Activated CD4-positive, alpha-beta memory T cell treated with anti-CD3 and anti-CD28 coated beads for 36 hours (primary cell): ENCODE measurements at regions of chr16 and their contacts with region 1.

Region 1: GRCh38 chr16:71412270-71413160 is 29.3 kb downstream of the TLE7 start:
- DNase-seq: peak; percentile 71
- H3K4me3 Mint-ChIP-seq: no peak overlapping the region
- H3K27ac Mint-ChIP-seq: no peak overlapping the region
- H3K4me1 Mint-ChIP-seq: peaks cover 5% of the 10 kb centered on the region
- H3K27me3 Mint-ChIP-seq: peaks cover 34% of the 10 kb centered on the region

Region 2: DNA sequence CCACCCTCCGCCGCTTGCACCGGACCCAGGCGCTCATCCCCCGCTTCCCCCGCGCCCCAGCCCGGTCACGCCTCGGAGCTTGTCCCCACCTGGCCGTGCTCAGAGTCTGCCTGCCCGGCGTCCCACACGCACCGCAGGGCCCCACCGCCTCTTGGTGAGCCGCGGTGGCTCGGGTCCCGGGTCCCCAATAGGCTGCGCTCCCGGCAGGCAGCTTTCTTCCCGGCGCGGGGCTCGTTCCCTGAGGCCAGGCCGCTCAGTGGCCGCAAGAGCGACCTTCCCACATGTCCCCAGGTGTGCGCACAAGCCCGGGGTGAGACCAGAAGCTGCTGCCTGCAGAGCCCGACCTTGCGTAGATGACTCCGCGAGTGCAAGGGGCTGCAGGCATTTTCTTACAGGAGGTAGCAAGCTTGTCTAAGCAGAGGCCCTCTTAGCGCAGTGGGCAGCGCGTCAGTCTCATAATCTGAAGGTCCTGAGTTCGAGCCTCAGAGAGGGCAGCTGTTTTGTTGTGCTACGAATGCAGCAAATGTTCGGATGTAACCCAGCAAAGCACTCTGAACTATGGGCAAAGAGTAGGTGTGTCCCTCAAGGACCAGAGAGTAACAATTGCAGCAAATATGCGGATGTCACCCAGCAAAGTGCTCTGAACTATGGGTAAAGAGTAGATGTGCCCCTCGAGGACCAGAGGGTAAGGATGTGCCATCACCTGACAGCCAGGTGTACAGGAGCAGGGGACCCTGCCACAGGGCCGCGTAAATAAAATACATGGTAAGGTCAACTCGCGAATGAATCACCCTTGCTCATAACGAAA is 13.8 kb after region 1 on chr16:
- CTCF ChIA-PET with region 1: interaction called, 22 read pairs
- POLR2A ChIA-PET with region 1: no interaction called
- intact Hi-C with region 1: no loop called
- DNase-seq: peak; percentile 41
- H3K4me3 Mint-ChIP-seq: no peak overlapping the region
- H3K27ac Mint-ChIP-seq: no peak overlapping the region
- H3K4me1 Mint-ChIP-seq: peaks cover 5% of the 10 kb centered on the region
- H3K27me3 Mint-ChIP-seq: peaks cover 37% of the 10 kb centered on the region

Region 3: DNA sequence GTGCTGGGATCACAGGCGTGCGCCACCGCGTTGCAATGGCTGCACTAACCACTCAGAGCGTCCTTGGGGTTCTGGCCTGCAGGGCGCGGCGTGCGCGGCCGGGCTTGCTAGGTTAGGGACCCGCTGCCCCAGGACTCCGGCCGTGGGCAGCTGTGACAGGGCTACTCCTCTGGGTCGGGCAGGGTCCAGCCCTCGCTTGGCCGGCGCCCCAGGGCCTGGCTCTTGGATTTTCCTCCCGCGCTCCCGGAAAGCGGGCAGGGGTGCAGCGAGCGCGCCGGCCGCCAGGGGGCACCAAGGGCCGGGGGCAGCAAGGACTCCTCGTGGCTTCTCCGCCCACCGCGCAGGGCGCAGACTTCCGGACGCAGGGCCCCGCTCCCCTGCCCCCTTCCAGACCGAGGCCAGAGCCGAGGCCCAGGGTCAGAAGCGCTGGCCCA is 28.9 kb after region 1 on chr16:
- CTCF ChIA-PET with region 1: interaction called, 14 read pairs
- POLR2A ChIA-PET with region 1: no interaction called
- intact Hi-C with region 1: no loop called
- DNase-seq: peak; percentile 44
- H3K4me3 Mint-ChIP-seq: no peak overlapping the region
- H3K27ac Mint-ChIP-seq: no peak overlapping the region
- H3K4me1 Mint-ChIP-seq: no peaks in the 10 kb centered on the region
- H3K27me3 Mint-ChIP-seq: peaks cover 10% of the 10 kb centered on the region

Region 4: GRCh38 chr16:71499775-71500364 is 87.4 kb after region 1 on chr16:
- CTCF ChIA-PET with region 1: interaction called, 141 read pairs
- POLR2A ChIA-PET with region 1: no interaction called
- intact Hi-C with region 1: loop called (anchors 1 kb)
- DNase-seq: peak; percentile 47
- H3K4me3 Mint-ChIP-seq: no peak overlapping the region
- H3K27ac Mint-ChIP-seq: no peak overlapping the region
- H3K4me1 Mint-ChIP-seq: no peaks in the 10 kb centered on the region
- H3K27me3 Mint-ChIP-seq: peaks cover 2% of the 10 kb centered on the region

Region 5: GRCh38 chr16:71520555-71520954 is 108.0 kb after region 1 on chr16:
- CTCF ChIA-PET with region 1: no interaction called
- POLR2A ChIA-PET with region 1: no interaction called
- intact Hi-C with region 1: no loop called
- DNase-seq: no peak
- H3K4me3 Mint-ChIP-seq: no peak overlapping the region
- H3K27ac Mint-ChIP-seq: no peak overlapping the region
- H3K4me1 Mint-ChIP-seq: no peaks in the 10 kb centered on the region
- H3K27me3 Mint-ChIP-seq: peaks cover 5% of the 10 kb centered on the region

Region 6: DNA sequence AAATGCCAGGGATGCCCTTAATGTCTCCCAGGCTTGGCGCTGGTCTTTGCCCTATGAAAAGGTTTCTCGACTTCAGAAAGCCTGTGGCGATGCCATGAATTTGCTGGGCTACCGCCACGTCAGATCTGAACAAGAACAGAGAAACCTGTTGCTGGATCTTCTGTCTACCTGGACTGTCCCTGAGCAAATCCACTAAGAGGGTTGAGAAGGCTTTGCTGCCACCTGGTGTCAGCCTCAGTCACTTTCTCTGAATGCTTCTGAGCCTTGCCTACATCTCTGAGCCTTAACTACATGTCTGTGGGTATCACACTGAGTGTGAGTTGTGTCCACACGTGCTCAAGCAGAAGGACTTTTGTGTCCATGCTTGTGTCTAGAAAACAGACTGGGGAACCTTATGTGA is 125.1 kb after region 1 on chr16:
- CTCF ChIA-PET with region 1: interaction called, 21 read pairs
- POLR2A ChIA-PET with region 1: no interaction called
- intact Hi-C with region 1: no loop called
- DNase-seq: peak; percentile 58
- H3K4me3 Mint-ChIP-seq: no peak overlapping the region
- H3K27ac Mint-ChIP-seq: no peak overlapping the region
- H3K4me1 Mint-ChIP-seq: peaks cover 4% of the 10 kb centered on the region
- H3K27me3 Mint-ChIP-seq: peaks cover 6% of the 10 kb centered on the region